Activated CD4-positive, alpha-beta T cell treated with anti-CD3 and anti-CD28 coated beads for 36 hours (primary cell): ENCODE measurements at regions of chr12 and their contacts with region 1.

Region 1: DNA sequence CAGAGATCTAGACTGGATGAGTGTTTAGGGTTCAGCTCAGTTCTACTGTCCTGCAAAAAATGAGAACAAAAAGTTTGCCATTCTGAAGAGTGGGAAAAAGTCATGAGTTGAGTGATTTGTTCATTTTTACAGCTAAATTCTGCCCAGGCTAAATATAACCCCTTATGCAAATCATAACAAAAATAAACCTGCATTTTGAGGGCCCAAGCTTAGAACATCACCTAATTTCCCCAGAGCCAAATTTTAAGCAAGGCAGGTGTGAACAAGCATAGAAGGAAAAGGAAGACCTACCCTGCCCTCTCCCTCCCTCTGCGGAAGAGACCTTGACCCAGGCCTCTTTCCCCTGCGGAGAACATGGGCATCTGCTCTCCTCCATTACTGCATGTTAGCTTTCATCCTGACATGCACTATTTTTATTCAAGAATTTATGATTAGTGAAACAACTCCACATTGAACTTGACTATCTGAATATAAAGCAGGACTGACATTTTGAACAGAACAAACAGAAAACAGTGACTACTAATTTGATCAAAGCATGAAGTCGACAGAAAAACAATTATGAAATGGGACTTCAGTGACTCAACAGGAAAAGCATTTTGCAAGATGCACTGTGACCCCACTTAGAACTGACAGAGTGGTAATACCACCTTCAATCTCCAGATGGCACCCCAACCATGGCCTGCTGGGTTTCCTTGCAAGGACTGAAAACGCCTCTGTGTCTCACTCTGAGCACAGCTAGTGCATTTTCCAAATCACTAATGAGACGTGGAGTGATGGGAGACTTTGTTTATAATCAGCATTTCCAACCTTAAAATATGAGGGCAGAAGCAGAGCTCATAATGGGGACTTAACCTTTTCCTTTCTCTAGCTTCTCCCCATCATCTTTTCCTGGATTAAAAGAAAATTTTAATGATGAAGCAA is 30.9 kb upstream of the SELPLG start:
- DNase-seq: peak; percentile 91
- ATAC-seq: peak; percentile 99
- H3K4me3 Mint-ChIP-seq: peak overlapping the region; percentile 18
- H3K27ac Mint-ChIP-seq: peak overlapping the region; percentile 84
- H3K4me1 Mint-ChIP-seq: peaks cover 29% of the 10 kb centered on the region
- H3K27me3 Mint-ChIP-seq: no peaks in the 10 kb centered on the region

Region 2: GRCh38 chr12:107309020-107309419 is 1355.6 kb before region 1 on chr12:
- CTCF ChIA-PET with region 1: no interaction called
- POLR2A ChIA-PET with region 1: no interaction called
- intact Hi-C with region 1: no loop called
- DNase-seq: no peak
- ATAC-seq: peak; percentile 63
- H3K4me3 Mint-ChIP-seq: no peak overlapping the region
- H3K27ac Mint-ChIP-seq: no peak overlapping the region
- H3K4me1 Mint-ChIP-seq: peaks cover 14% of the 10 kb centered on the region
- H3K27me3 Mint-ChIP-seq: no peaks in the 10 kb centered on the region

Region 3: DNA sequence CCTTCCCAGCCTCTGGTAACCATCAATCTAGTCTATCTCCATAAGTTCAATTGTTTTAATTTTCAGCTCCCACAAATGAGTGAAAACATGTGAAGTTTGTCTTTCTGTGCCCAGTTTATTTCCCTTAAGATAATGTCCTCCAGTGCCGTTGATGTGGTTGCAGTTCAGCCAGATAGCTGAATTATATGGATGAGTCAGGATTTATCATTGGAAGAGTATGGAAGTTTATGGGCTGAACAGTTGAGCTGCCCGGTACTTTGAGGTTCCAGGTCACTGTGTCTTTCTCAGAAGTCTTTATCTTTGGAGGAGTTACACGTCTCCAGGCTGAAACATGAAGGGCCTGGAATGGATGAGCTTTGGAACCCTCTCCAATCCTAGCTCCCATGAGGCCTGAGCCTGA is 770.0 kb before region 1 on chr12:
- CTCF ChIA-PET with region 1: no interaction called
- POLR2A ChIA-PET with region 1: no interaction called
- intact Hi-C with region 1: no loop called
- DNase-seq: no peak
- ATAC-seq: no peak
- H3K4me3 Mint-ChIP-seq: no peak overlapping the region
- H3K27ac Mint-ChIP-seq: no peak overlapping the region
- H3K4me1 Mint-ChIP-seq: no peaks in the 10 kb centered on the region
- H3K27me3 Mint-ChIP-seq: peaks cover 11% of the 10 kb centered on the region

Region 4: DNA sequence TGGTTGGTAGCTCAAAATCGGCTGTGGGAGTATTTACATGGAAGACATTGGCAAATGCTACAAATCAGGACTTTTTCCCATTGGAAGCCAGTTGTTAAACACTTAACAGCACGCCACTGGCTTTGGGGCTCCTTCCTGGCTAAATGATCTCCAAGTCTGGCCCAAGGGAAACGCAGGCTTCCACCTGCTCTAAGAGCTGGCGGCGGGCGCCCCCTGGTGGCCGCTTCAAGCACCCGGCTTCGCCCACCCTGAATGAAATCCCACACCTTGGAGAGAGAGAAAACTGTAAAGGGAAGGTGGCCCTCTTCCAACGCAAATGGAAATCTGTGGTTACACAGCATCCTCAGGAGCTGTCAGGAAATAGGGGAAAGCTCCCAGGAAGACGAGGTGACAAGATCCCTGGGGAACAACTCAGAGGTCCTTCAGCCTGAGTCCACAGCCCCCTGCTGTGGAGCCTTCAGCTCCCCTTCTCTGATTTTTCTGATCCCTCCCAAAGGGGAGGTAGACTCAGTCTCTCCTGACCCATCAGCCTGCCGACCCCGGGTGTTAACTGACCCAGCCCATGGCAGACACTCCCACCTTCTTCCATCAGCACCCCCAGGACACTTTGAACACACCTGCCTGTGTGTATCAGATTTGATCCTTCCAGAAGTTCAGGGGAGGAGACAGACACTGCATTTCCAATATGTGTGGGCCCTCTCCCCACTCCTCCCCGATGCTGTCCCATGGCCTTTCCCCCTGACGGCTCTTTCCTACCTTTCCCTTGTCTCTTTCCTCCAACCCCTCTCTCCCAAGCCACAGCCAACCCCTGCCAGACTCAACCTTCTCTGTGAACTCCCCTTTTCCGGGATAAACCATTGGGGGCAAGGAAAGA is 46.3 kb before region 1 on chr12:
- CTCF ChIA-PET with region 1: interaction called, 35 read pairs
- POLR2A ChIA-PET with region 1: no interaction called
- intact Hi-C with region 1: no loop called
- DNase-seq: peak; percentile 88
- ATAC-seq: peak; percentile 46
- H3K4me3 Mint-ChIP-seq: no peak overlapping the region
- H3K27ac Mint-ChIP-seq: peak overlapping the region; percentile 62
- H3K4me1 Mint-ChIP-seq: peaks cover 40% of the 10 kb centered on the region
- H3K27me3 Mint-ChIP-seq: no peaks in the 10 kb centered on the region

Region 5: DNA sequence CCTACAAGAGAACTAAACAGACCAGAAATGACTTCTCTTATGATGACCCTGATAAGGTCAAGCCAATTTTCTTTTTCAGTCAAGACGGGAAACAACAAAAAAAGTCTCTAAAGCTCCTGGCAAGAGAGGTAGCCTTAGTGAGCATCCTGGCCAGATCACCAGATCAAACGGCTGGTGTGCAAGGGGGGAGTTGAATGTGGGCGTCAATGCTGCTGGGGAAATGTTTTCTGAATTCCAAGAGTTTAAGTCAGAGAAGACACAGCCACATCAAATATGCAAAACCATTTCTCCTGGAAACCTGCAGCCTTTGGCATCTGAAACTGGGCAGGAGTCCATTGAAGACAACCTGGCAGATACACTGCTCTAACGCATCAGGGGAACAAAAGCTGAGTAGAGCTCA is 14.9 kb before region 1 on chr12:
- CTCF ChIA-PET with region 1: interaction called, 19 read pairs
- POLR2A ChIA-PET with region 1: no interaction called
- intact Hi-C with region 1: no loop called
- DNase-seq: no peak
- ATAC-seq: no peak
- H3K4me3 Mint-ChIP-seq: no peak overlapping the region
- H3K27ac Mint-ChIP-seq: peak overlapping the region; percentile 35
- H3K4me1 Mint-ChIP-seq: peaks cover 41% of the 10 kb centered on the region
- H3K27me3 Mint-ChIP-seq: no peaks in the 10 kb centered on the region

Region 6: DNA sequence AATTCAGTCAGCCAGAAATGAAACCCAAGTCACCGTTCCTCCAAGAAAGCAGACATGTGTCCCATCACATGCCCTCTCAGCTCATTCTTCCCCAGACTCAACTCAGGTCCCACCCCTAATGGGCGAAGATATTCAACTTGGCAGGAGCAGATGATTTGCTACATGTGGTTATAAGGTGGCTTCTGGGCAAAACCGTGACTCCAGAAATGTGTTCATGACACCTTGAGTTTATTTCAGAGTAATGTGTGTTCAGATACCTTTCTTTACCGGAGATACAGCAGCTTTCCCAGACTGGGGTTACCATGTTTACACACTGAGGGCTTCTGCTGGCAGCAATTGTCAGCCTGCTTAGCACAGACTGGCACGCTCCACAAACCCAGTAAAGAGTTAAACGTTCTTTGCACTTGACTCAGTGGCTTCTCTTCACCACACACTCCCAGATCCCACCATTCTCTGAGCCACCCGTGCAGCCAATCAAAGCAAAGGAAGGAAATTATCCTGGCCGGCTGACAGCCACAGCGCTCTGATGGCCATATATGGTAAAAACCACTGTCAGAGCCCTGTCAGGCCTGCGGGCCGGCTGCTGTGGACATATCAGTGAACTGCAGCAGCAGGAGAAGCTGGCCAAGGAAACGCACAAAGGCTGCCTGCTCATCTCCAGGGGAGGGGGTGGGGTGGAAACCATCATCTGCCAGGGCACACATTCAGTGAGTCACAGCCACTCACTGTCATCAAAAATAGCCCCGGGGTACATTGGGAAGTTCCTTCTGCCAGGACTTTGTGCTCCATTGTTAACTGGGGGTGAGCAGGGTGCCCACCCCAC is 26.8 kb after region 1 on chr12:
- CTCF ChIA-PET with region 1: interaction called, 30 read pairs
- POLR2A ChIA-PET with region 1: interaction called, 5 read pairs
- intact Hi-C with region 1: loop called (anchors 1 kb)
- DNase-seq: peak; percentile 92
- ATAC-seq: peak; percentile 63
- H3K4me3 Mint-ChIP-seq: peak overlapping the region; percentile 67
- H3K27ac Mint-ChIP-seq: peak overlapping the region; percentile 96
- H3K4me1 Mint-ChIP-seq: peaks cover 80% of the 10 kb centered on the region
- H3K27me3 Mint-ChIP-seq: no peaks in the 10 kb centered on the region

Region 7: DNA sequence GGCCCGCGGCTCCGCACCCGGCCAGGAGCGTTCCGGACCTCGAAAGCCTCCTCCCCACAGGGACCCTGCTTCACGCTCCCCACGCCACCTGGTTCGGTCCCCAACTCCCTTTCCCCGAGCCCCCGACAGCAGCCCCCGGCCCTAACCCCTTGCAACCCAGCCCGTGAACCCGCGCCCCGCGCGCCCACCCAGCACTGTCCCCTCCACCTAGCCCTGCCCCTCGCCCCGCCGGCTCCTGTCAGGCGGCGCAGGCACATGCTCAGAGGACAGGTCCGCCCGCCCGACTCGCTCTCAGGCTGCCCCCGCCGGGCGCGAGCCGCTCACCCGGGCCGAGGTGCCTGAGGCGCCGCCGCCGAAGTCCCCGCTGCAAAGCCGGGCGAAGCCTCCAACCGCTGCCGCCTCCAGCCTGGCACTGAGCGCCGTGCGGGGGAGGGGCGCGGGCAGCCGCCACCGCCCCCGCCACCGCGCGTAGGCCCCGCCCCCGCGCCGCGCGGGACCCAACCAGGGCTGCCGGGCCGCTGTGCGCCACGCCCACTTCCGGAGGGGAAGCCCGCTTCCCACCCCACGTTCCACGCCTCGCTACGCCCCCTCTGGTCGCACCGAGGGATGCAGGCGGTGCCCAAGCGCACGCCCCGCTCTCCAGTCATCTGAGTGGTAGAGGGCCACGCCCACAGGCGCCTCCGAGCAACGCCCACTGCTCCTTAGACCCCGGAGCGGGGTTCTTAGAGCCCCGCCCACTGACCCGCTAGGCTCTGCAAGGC is 66.7 kb after region 1 on chr12 and contains the start of gene CORO1C:
- CTCF ChIA-PET with region 1: interaction called, 16 read pairs
- POLR2A ChIA-PET with region 1: no interaction called
- intact Hi-C with region 1: loop called (anchors 1 to 2 kb)
- DNase-seq: peak; percentile 98
- ATAC-seq: peak; percentile 78
- H3K4me3 Mint-ChIP-seq: peak within 1 kb of the TSS; percentile 88
- H3K27ac Mint-ChIP-seq: peak within 1 kb of the TSS; percentile 93
- H3K4me1 Mint-ChIP-seq: peaks cover 36% of the 10 kb centered on the region
- H3K27me3 Mint-ChIP-seq: no peaks in the 10 kb centered on the region
- total RNA-seq, gene CORO1C: 83.5 to 90.8 TPM

Region 8: DNA sequence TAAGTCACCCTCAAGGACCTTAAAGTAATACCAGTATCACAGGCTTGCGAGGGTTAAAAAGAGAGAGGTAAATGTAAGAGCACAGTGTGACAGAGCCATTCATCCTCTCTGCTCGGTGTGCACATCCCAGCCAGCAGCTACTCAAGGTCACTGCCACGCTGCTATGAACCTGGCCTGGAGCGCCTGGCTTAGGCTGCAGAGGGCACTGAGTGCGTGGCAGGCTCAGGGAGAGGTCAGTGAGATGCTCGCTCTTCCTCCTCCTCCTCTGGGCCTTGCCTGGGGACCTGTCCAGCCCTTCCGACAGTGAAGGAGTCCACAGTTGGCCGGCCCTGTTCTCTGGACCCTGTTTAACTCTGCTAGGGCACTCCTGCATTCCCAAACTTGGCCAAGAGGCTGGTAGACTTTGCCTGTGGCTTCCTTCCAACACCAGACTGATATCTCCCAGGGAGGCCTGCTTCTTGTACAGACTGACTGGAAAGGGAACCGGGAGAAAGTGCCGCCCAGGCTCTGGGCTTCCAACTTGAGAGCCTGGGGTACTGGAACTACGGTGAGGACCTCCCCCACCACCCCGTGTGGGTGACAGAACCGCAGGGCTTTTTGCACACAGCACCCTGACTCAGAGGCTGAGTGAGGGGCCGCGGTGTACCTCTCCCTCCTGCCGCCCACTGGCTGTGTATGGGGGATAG is 129.3 kb after region 1 on chr12:
- CTCF ChIA-PET with region 1: interaction called, 281 read pairs
- POLR2A ChIA-PET with region 1: no interaction called
- intact Hi-C with region 1: no loop called
- DNase-seq: no peak
- ATAC-seq: no peak
- H3K4me3 Mint-ChIP-seq: no peak overlapping the region
- H3K27ac Mint-ChIP-seq: no peak overlapping the region
- H3K4me1 Mint-ChIP-seq: peaks cover 2% of the 10 kb centered on the region
- H3K27me3 Mint-ChIP-seq: no peaks in the 10 kb centered on the region

Region 9: GRCh38 chr12:108884116-108885012 is 219.8 kb after region 1 on chr12:
- CTCF ChIA-PET with region 1: interaction called, 10 read pairs
- POLR2A ChIA-PET with region 1: no interaction called
- intact Hi-C with region 1: no loop called
- DNase-seq: peak; percentile 86
- ATAC-seq: peak; percentile 88
- H3K4me3 Mint-ChIP-seq: no peak overlapping the region
- H3K27ac Mint-ChIP-seq: no peak overlapping the region
- H3K4me1 Mint-ChIP-seq: no peaks in the 10 kb centered on the region
- H3K27me3 Mint-ChIP-seq: no peaks in the 10 kb centered on the region